A673 (cell line): ENCODE measurements at regions of chr12 and their contacts with region 1.

Region 1: DNA sequence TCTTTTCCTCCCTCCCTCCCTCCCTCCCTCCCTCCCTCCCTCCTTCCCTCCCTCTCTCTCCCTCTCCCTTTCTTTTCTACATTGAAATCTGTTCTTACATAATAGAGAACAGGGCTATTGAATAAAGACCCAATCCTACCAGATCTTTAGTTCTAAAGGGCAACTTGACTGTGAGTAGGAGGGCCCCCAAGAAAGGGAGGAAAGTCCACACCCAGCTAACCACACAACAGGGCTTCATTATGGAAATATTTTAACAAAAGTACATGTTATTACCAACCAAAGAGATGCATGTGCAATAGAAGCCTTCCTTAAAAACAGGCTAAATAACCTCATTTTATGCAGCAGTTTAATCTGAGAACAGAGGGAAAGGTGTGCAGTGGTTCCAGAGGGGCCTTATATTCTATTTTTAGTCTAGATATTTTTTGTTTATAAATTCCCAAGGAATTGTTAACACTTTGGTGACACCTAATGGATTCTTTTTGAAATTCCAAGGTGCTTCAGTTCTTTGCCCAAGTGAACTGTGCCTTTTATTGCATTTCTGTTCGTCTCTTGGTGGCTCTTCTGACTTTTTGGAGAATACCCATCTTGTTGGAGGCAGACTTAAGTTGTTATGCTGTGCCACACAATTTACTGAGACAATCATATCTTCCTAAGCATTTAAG is 63.0 kb downstream of the GNS start:
- DNase-seq: peak; percentile 53
- H3K4me3 ChIP-seq: no peak overlapping the region
- H3K27ac ChIP-seq: no peak overlapping the region
- H3K4me1 ChIP-seq: peaks cover 13% of the 10 kb centered on the region
- H3K27me3 ChIP-seq: no peaks in the 10 kb centered on the region
- CTCF ChIP-seq: peak; percentile 54

Region 2: DNA sequence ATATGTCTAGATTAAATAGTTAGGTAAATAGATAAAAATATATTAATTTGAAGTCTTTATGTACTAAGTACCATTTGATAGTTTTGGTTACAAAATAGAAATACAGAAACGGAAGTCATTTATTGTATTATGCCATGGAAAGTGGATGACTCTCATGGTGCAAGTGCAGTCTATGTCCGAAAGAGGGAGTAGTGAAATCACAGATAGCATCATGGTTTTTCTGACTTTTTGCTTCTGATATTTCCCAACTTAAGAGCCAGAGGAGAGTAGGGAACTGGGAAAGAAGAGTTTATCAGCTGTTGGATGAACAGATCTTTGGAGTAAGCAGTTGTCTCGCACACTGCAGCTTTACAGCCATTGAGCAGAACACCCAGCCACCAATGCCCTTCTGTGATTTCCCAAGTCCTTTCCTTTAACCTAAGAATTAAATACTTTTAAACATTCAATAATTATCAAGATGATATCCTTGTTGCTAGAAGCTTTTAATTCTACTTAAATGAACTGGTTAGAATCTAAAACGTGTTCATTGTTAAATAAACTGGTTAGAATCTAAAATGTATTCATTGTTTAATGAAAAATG is 870.1 kb before region 1 on chr12:
- CTCF ChIA-PET with region 1: interaction called, 4 read pairs
- POLR2A ChIA-PET with region 1: no interaction called
- intact Hi-C with region 1: loop called (anchors 10 kb)
- DNase-seq: peak; percentile 73
- H3K4me3 ChIP-seq: no peak overlapping the region
- H3K27ac ChIP-seq: no peak overlapping the region
- H3K4me1 ChIP-seq: no peaks in the 10 kb centered on the region
- H3K27me3 ChIP-seq: no peaks in the 10 kb centered on the region
- CTCF ChIP-seq: peak; percentile 93

Region 3: DNA sequence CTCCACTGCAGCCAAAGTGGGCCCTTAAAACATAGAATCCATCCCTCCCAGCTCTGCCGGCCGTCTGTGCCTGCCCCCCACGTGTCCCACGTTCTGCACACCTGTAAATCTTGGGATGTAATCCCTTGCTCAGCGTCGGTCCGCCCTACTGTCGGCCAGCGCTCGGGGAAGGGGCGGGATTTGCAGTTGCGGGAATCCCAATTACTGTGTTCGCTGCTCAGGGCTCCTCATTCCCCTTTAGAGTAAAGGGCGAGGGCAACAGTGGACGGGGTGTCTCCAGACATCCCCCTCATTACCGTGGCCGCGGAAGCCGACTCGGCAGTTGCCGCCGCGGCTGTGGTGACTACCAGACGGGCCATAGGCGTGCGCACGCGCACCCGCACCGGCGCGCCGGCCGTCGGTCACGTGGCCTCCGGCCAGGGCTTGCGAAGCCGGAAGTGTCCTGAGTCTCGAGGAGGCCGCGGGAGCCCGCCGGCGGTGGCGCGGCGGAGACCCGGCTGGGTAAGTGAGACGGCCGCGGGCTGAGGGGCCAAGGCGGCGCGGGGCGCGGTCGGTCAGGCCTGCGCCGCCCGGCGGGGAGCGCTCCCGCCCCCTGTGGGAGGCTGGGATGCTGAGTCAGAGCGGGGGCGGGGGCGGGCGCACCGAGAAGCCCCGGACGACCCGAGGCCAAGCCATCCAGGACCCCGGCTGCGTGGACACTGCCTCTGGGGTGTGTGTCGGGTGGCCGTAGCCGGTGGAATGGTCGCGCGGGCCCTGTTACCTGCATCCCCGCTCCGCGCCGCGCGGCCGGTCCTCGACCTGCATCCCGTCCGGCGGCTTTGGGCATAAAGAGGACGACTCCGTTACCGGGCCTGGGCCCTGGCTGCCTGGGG is 244.3 kb before region 1 on chr12 and contains the start of gene TBK1:
- CTCF ChIA-PET with region 1: no interaction called
- POLR2A ChIA-PET with region 1: no interaction called
- intact Hi-C with region 1: loop called (anchors 10 kb)
- DNase-seq: peak; percentile 74
- H3K4me3 ChIP-seq: peak within 1 kb of the TSS; percentile 90
- H3K27ac ChIP-seq: peak within 1 kb of the TSS; percentile 87
- H3K4me1 ChIP-seq: peaks cover 11% of the 10 kb centered on the region
- H3K27me3 ChIP-seq: no peaks in the 10 kb centered on the region
- CTCF ChIP-seq: no peak
- total RNA-seq, gene TBK1: 30.2 and 33.8 TPM in 2 replicates

Region 4: DNA sequence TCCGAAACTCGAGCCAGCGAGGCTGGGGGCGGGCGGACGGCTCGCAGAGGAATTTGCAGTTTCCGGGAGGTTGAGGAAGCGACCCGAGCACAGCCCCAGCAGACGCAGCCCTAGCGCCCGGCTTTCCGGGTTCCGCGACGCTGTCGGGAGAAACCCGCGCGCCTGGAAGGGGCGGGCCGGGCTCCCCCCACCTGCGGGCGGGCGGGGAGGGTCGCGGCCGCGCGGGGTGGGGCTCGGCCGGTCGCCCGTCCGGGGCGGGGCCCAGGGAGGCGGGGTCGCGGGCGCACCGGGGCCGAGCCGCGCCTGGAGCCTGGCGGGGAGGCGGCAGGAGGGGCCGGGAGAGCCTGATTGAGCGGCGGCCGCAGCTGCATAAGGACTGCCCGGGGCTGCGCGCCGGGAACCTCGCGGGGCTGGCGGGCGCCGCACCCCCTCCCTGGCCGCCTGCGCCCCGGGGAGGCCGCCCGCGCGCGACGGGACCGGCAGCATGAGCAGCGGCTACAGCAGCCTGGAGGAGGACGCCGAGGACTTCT is 86.0 kb before region 1 on chr12 and contains the start of gene RASSF3:
- CTCF ChIA-PET with region 1: interaction called, 3 read pairs
- POLR2A ChIA-PET with region 1: no interaction called
- intact Hi-C with region 1: loop called (anchors 5 kb)
- DNase-seq: peak; percentile 84
- H3K4me3 ChIP-seq: peak within 1 kb of the TSS; percentile 97
- H3K27ac ChIP-seq: peak within 1 kb of the TSS; percentile 88
- H3K4me1 ChIP-seq: peaks cover 4% of the 10 kb centered on the region
- H3K27me3 ChIP-seq: no peaks in the 10 kb centered on the region
- CTCF ChIP-seq: no peak
- total RNA-seq, gene RASSF3: 37.7 and 38.2 TPM in 2 replicates

Region 5: DNA sequence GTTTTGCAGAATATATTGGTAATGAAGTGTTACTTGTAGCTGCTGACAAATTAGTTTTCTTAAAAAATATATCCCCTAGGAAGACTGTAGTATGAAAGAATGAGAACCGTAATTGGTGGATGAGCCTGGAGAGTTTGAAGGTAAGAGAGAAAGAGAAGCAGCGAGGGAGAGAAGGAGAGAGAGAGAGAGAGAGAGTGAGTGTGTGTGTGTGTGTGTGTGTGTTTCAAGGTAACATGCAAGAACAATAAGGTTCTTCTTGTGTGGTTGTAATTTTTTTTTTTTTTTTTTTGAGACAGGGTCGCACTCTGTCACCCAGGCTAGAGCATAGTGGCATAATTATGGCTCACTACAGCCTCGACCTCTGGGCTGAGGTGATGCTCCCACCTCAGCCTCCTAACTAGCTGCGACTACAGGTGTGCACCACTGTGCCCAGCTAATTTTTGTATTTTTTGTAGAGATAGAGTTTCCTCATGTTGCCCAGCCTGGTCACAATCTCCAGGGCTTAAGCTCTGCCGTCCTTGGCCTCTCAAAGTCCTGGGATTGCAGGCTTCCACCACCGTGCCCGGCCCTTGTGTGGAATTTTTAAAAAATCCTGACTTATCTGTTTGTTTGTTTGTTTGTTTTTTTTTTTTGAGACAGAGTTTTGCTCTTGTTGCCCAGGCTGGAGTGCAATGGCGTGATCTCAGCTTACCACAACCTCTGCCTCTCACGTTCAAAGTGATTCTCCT is 12.2 kb before region 1 on chr12:
- CTCF ChIA-PET with region 1: interaction called, 12 read pairs
- POLR2A ChIA-PET with region 1: no interaction called
- intact Hi-C with region 1: no loop called
- DNase-seq: no peak
- H3K4me3 ChIP-seq: no peak overlapping the region
- H3K27ac ChIP-seq: peak overlapping the region; percentile 73
- H3K4me1 ChIP-seq: peaks cover 46% of the 10 kb centered on the region
- H3K27me3 ChIP-seq: no peaks in the 10 kb centered on the region
- CTCF ChIP-seq: no peak